Activated T-helper 2 cell treated with anti-CD3 and anti-CD28 coated beads, Interferon-gamma antibody, Interleukin-2, Interleukin-4, amounts not matched to agents 10 μg/mL and 5 μg/mL and 100 μg/mL, durations not matched to agents 14 hours and 24 hours and 36 hours (primary cell): ENCODE measurements at regions of chr1 and their contacts with region 1.

Region 1: DNA sequence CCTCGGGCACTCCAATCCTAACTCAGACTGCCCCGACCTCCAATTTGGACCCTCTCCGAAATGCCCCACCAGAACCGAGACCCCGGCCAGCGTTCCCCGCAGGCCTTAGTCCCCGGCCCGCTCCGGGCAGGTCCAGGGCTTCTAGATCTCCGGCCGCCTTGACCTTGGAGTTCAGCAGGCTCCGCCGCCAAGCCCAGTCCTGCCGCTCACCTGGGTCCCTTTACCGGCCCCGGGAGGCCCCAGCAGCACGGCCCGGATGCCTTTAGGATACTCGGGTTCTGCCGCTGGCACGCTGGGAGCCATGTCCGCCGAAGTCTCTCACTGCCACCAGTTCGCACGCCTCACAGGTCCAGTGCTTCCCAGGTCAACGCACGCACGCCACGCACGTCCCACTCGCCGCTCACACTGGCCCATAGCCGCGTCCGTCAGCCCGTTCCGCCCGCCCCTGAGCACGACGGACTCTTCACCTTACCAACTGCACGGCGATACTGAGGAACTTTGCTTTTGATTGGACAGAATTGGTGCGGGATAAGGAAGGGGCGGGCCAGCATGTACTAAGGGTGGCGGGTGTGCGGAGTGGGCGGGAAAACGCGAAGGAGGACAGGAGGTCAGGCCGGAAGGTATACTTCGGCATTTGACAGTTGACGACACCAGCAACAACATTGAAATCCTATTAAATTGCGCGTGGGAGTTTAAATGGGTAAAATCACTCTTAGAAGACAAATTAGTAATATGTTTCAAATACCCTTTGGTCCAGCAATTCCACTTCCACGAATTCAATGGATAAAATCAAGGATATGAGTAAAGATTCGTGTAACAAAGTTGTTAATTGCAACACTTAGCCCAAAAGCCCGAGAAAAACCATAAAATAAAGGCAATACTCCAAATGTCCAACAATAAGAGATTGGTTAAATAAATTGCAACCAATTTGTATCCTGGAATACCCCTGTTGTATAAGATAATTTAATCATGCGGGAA is at the start of gene AK2:
- DNase-seq: peak; percentile 92
- H3K4me3 Mint-ChIP-seq: peak within 1 kb of the TSS; percentile 99
- H3K27ac Mint-ChIP-seq: peak within 1 kb of the TSS; percentile 83
- H3K4me1 Mint-ChIP-seq: peaks cover 42% of the 10 kb centered on the region
- H3K27me3 Mint-ChIP-seq: no peaks in the 10 kb centered on the region
- total RNA-seq, gene AK2: 349 TPM in 2 replicates

Region 2: GRCh38 chr1:32072622-32073298 is 964.1 kb before region 1 on chr1 and contains the start of gene TMEM39B:
- intact Hi-C with region 1: loop called (anchors 2 kb)
- DNase-seq: peak; percentile 94
- H3K4me3 Mint-ChIP-seq: peak within 1 kb of the TSS; percentile 87
- H3K27ac Mint-ChIP-seq: peak within 1 kb of the TSS; percentile 85
- H3K4me1 Mint-ChIP-seq: peaks cover 32% of the 10 kb centered on the region
- H3K27me3 Mint-ChIP-seq: no peaks in the 10 kb centered on the region
- total RNA-seq, gene TMEM39B: 32.5 and 34.5 TPM in 2 replicates

Region 3: DNA sequence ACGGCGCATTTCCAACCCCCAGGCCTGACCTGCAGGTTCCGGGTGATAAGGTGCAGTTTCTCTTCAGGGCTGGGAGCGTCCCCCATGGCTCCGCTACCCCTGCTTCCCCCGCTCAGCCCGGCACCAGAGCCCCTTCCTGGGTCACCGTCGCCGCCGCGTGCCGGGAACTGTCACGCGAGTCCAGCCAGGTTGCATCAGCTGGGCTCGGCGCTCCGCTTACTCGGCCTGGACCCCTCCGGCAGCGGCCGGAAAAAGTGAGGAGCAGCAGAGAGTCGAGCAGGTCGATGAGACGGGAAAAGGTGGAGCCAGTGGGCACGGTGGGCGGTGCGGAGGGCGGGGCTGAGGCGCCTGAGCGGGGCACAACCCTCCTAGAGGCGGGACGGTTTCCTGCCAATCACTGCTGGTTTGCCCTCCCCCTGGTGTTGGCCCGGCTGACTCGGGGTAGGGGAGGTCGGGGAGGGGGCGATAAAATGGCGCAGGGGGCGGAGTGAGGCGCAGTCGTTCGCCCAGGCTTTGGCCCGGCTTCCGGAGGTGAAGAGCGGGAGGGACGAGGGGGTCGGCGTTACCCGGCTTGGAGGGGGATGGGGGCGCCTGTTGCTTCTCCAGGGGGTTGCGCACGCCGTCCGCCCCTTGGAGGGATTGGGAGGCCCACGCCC is 219.5 kb before region 1 on chr1 and contains the starts of genes S100PBP and YARS1:
- intact Hi-C with region 1: loop called (anchors 5 kb)
- DNase-seq: peak; percentile 100
- H3K4me3 Mint-ChIP-seq: peak within 1 kb of the TSS; percentile 99
- H3K27ac Mint-ChIP-seq: peak within 1 kb of the TSS; percentile 96
- H3K4me1 Mint-ChIP-seq: peaks cover 46% of the 10 kb centered on the region
- H3K27me3 Mint-ChIP-seq: no peaks in the 10 kb centered on the region
- total RNA-seq, gene S100PBP: 50.2 and 50.5 TPM in 2 replicates
- total RNA-seq, gene YARS1: 155 and 172 TPM in 2 replicates

Region 4: DNA sequence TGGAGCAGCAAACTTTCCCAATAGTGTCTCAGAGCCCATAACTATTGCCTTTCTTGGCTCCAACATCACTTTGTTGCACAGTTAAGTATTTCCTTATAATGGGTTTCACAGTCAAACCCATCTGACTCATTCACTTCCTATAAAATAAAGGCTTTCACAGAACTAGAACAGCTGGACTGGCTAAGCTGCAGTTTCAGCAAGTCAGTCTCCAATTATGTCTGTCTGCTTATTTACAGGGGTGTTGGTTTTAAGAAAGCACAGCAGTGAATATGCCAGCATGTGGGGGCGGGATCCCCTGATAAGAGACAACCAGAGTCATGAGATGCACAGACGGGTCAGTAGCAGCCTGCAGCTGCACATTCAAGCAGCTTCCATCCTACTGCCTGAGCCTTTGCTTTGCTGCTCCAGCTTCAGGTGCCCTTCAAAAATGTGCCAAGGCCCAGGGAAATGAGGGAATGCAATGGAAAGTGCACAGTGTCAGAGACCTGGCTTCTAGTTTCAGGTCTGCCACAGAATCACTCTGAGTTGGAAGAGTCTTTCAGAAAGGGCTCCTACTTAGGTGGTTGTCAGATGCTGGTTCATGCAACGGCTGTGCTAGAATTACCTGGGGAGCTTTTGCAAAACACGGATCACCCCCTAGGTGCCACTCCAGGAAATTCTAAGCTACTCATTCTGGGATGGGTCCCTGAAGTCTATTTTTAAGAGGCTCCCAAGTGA is 97.0 kb before region 1 on chr1:
- intact Hi-C with region 1: loop called (anchors 5 kb)
- DNase-seq: no peak
- H3K4me3 Mint-ChIP-seq: no peak overlapping the region
- H3K27ac Mint-ChIP-seq: peak overlapping the region; percentile 74
- H3K4me1 Mint-ChIP-seq: peaks cover 43% of the 10 kb centered on the region
- H3K27me3 Mint-ChIP-seq: no peaks in the 10 kb centered on the region

Region 5: GRCh38 chr1:32964461-32965250 is 72.2 kb before region 1 on chr1 and contains the start of gene RNF19B:
- intact Hi-C with region 1: loop called (anchors 5 kb)
- DNase-seq: peak; percentile 94
- H3K4me3 Mint-ChIP-seq: peak within 1 kb of the TSS; percentile 91
- H3K27ac Mint-ChIP-seq: peak within 1 kb of the TSS; percentile 74
- H3K4me1 Mint-ChIP-seq: peaks cover 49% of the 10 kb centered on the region
- H3K27me3 Mint-ChIP-seq: no peaks in the 10 kb centered on the region
- total RNA-seq, gene RNF19B: 50.4 and 52.5 TPM in 2 replicates

Region 6: DNA sequence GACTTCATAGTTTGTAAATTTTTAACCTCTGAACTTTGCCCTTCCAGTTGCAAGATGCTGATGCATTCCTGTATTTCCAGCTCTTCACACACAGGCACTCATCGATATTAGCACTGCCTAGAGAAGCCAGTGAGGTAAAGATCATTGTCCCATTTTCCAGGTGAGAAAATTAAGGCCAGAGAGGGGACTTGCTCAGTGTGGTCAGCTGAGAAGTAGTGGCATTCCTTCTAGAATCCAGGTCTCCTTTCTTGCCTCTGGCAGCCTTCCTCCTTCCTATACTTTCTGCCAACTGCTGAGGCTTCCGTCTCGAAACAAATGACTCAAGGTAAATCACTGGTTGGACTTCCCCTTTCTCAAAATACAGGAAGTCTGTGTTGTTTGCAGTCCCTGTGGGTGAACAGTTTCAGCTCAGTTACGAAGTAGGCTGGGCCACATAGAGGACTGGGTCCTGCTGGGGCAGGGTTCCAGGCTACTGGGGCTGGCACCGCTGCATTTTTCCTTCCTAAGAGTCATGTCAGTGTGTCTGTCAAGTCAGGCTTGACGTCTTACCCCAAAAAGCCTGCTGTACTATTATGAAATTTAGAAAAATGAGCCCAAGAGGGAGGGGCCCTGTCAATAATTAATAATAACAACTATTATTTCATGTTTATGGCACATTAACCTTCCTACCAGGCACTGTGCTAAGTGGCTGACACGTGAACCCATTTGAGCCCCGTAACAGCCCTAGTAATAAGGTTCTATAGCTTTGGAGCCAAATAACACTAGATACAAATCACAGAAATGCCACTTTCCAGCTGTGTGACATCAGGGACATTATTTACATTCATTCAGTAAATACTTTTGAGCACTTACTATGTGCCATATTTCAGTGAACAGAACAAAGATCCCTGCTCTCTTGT is 55.6 kb before region 1 on chr1:
- intact Hi-C with region 1: loop called (anchors 5 kb)
- DNase-seq: peak; percentile 58
- H3K4me3 Mint-ChIP-seq: peak overlapping the region; percentile 47
- H3K27ac Mint-ChIP-seq: peak overlapping the region; percentile 87
- H3K4me1 Mint-ChIP-seq: peaks cover 63% of the 10 kb centered on the region
- H3K27me3 Mint-ChIP-seq: no peaks in the 10 kb centered on the region

Region 7: GRCh38 chr1:33080885-33081553 is 44.2 kb after region 1 on chr1 and contains the start of gene AZIN2:
- intact Hi-C with region 1: loop called (anchors 5 kb)
- DNase-seq: peak; percentile 91
- H3K4me3 Mint-ChIP-seq: peak within 1 kb of the TSS; percentile 70
- H3K27ac Mint-ChIP-seq: no peak within 1 kb of the TSS
- H3K4me1 Mint-ChIP-seq: peaks cover 20% of the 10 kb centered on the region
- H3K27me3 Mint-ChIP-seq: peaks cover 25% of the 10 kb centered on the region
- total RNA-seq, gene AZIN2: 2.4 and 2.9 TPM in 2 replicates